ENCODE measurements at regions of chr6 and their contacts with region 1.

Region 1: GRCh38 chr6:42745707-42746462 is at the start of gene TBCC:
- DNase-seq: peak; percentile 72
- ATAC-seq: peak; percentile 75
- H3K4me3 Mint-ChIP-seq: peak within 1 kb of the TSS; percentile 100
- H3K27ac Mint-ChIP-seq: peak within 1 kb of the TSS; percentile 100
- H3K4me1 Mint-ChIP-seq: peaks cover 32% of the 10 kb centered on the region
- H3K27me3 Mint-ChIP-seq: no peaks in the 10 kb centered on the region
- CTCF ChIP-seq: no peak
- total RNA-seq, gene TBCC: 41.5 and 41.7 TPM in 2 replicates

Region 2: DNA sequence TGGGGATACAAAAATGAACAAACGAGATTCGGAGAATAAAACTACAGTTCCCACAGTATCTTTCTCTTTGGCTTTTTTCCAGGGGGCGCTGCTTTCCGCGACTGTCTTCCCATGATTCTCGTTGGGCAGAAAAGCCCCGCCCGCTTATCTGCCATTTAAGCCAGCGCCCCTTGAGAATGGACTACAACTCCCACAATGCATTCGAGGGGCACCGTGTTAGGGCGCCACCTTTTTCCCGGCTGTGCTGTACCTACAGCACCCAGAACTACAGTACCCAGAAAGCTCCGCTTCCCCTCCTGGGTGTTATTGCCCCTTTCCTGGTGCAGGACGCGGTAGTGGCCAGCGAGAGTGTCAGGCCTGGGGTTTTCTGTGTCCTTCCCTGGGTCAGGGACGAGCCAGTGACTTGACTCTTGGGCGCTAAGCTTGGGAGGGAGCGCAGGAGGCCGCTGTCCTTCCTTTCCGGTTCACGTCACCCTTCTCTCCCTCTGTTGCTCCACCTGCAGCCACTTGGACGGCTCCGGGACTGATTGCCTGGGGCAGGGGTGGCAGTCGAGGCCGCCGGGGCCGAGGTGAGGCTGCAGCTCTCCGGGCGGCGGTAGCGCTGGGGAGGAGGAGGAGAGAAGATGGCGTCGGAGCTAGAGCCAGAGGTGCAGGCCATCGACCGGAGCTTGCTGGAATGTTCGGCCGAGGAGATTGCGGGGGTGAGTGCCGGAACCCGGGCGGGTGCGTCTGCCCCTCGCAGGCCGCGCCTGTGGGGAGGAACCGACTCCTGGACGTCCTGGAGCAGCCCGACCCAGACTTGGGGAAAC is 182.0 kb before region 1 on chr6 and contains the start of gene UBR2:
- CTCF ChIA-PET with region 1: no interaction called
- POLR2A ChIA-PET with region 1: interaction called, 3 read pairs
- intact Hi-C with region 1: loop called (anchors 2 kb)
- DNase-seq: peak; percentile 73
- ATAC-seq: peak; percentile 96
- H3K4me3 Mint-ChIP-seq: peak within 1 kb of the TSS; percentile 92
- H3K27ac Mint-ChIP-seq: peak within 1 kb of the TSS; percentile 92
- H3K4me1 Mint-ChIP-seq: peaks cover 43% of the 10 kb centered on the region
- H3K27me3 Mint-ChIP-seq: no peaks in the 10 kb centered on the region
- CTCF ChIP-seq: no peak
- total RNA-seq, gene UBR2: 34.3 and 40.8 TPM in 2 replicates

Region 3: GRCh38 chr6:42764911-42765648 is 19.2 kb after region 1 on chr6:
- CTCF ChIA-PET with region 1: interaction called, 3 read pairs
- POLR2A ChIA-PET with region 1: interaction called, 1,220 read pairs
- intact Hi-C with region 1: no loop called
- DNase-seq: no peak
- ATAC-seq: no peak
- H3K4me3 Mint-ChIP-seq: no peak overlapping the region
- H3K27ac Mint-ChIP-seq: no peak overlapping the region
- H3K4me1 Mint-ChIP-seq: peaks cover 3% of the 10 kb centered on the region
- H3K27me3 Mint-ChIP-seq: no peaks in the 10 kb centered on the region
- CTCF ChIP-seq: no peak

Region 4: GRCh38 chr6:42805297-42805861 is 59.5 kb after region 1 on chr6:
- CTCF ChIA-PET with region 1: no interaction called
- POLR2A ChIA-PET with region 1: interaction called, 12 read pairs
- intact Hi-C with region 1: no loop called
- DNase-seq: no peak
- ATAC-seq: no peak
- H3K4me3 Mint-ChIP-seq: no peak overlapping the region
- H3K27ac Mint-ChIP-seq: no peak overlapping the region
- H3K4me1 Mint-ChIP-seq: peaks cover 2% of the 10 kb centered on the region
- H3K27me3 Mint-ChIP-seq: no peaks in the 10 kb centered on the region
- CTCF ChIP-seq: no peak

Region 5: GRCh38 chr6:42873313-42873712 is 127.4 kb after region 1 on chr6:
- CTCF ChIA-PET with region 1: no interaction called
- POLR2A ChIA-PET with region 1: interaction called, 12 read pairs
- intact Hi-C with region 1: no loop called
- DNase-seq: no peak
- ATAC-seq: no peak
- H3K4me3 Mint-ChIP-seq: no peak overlapping the region
- H3K27ac Mint-ChIP-seq: no peak overlapping the region
- H3K4me1 Mint-ChIP-seq: peaks cover 3% of the 10 kb centered on the region
- H3K27me3 Mint-ChIP-seq: no peaks in the 10 kb centered on the region
- CTCF ChIP-seq: no peak

Region 6: DNA sequence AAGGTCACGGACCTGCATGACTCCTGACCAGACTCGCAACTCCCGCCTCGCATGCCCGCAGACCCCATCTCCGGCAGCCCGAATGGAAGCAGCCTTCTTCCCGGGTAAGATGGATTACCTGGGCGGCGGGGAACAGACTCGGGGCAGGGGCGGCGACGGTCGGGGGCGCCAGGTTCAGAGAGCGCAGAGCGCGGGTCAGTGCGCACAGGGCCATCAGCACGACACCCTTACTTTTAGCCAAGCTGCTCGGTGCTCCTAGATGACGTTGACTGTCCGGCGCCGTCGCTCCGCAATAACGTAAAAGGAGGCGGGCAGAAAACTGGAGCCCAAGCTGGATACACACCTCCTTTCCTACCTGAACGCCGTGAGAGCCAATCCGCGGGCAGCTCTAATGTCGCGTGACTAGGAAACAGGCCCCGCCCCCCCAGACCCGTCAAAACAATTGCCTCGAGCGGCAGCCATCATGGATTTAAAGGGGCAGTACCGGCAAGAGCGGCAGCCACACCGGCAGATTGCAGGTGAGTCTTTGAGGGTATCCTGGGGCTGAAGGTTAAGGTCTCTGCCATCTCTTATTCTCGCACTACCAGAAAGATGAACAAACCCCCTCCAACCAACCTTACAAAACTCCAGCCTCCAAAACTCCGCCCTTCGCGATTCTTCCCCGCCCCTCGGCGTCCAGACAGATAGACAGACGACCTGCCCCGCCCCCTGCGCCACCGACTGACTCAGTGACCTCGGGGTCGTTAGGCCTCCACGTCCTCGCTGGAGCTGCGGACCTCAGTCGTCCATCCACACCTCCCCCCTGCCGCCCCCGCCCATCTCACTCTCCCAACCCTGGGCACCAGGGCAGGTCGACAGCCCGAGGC is 313.5 kb after region 1 on chr6 and contains the starts of genes KLC4 and MRPL2:
- CTCF ChIA-PET with region 1: no interaction called
- POLR2A ChIA-PET with region 1: interaction called, 11 read pairs
- intact Hi-C with region 1: loop called (anchors 1 kb)
- DNase-seq: peak; percentile 94
- ATAC-seq: peak; percentile 97
- H3K4me3 Mint-ChIP-seq: peak within 1 kb of the TSS; percentile 95
- H3K27ac Mint-ChIP-seq: peak within 1 kb of the TSS; percentile 97
- H3K4me1 Mint-ChIP-seq: peaks cover 38% of the 10 kb centered on the region
- H3K27me3 Mint-ChIP-seq: no peaks in the 10 kb centered on the region
- CTCF ChIP-seq: no peak
- total RNA-seq, gene KLC4: 17.0 and 19.8 TPM in 2 replicates
- total RNA-seq, gene MRPL2: 43.9 and 47.8 TPM in 2 replicates

Region 7: DNA sequence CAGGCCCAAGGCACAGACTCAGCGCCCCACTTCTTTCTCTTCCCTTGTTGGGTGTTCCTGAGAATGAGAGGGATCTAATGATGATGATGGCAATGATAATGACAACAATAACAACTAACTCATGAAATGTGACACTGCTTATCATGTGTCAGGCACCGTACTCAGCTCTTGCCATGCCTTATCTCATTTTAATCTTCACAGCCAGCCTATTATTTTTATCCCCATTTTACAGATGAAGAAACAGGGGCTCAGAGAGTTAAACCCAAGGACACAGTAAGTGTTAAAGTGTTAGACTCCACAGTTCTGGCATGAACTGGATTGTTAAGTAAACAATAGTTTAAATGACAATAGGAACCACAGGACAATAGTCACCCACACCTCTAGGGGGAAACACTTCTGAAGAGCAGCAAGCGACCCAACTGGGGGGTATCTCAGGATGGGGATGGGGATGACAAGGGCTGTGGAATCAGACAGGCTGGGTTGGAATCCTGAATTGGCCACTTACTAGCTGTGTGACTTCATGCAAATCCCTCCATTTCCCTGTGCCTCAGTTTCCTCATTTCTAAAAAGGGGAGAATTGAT is 911.4 kb after region 1 on chr6:
- CTCF ChIA-PET with region 1: no interaction called
- POLR2A ChIA-PET with region 1: no interaction called
- intact Hi-C with region 1: no loop called
- DNase-seq: no peak
- ATAC-seq: no peak
- H3K4me3 Mint-ChIP-seq: no peak overlapping the region
- H3K27ac Mint-ChIP-seq: no peak overlapping the region
- H3K4me1 Mint-ChIP-seq: no peaks in the 10 kb centered on the region
- H3K27me3 Mint-ChIP-seq: no peaks in the 10 kb centered on the region
- CTCF ChIP-seq: no peak